ENCODE measurements at regions of chr15 and their contacts with region 1.

Region 1: DNA sequence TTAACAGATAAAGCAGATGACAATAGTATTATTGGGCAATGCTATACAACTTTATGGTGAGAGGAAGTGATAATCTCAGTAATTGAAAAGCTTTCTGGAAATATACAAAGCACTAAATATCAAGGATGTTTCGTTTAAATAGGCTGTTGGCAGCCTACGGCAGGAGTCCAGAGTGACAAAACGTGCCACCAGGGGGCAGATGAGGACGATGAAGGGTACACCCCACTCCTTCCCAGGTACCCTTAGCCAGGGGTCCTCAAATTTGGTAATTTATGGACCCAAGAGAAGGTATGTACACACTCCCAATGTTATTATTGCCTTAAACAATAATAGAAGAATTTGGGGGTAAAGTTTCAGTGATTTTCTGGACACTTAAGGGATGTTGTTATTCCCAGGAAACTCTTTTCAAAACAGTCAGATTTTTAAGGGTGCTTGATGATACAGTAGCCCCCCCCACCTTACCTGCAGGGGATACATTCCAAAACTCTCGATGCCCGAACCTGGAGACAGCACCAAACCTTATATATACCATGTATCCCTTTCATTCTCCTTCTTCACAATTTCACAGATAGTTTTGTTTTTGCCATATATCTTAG is 1.4 kb upstream of the MAGEL2 start:
- DNase-seq: peak; percentile 40 to 70 (median 60)
- H3K4me3 ChIP-seq: no peak overlapping the region
- H3K27ac ChIP-seq: no peak overlapping the region
- H3K4me1 ChIP-seq: no peaks in the 10 kb centered on the region
- H3K27me3 ChIP-seq: no peaks in the 10 kb centered on the region
- CTCF ChIP-seq: peak; percentile 16 to 34 (median 21)
- EP300 ChIP-seq: no peak
- POLR2A ChIP-seq: no peak

Region 2: GRCh38 chr15:23663225-23663624 is 14.2 kb after region 1 on chr15:
- intact Hi-C with region 1: no loop called
- DNase-seq: no peak
- H3K4me3 ChIP-seq: no peak overlapping the region
- H3K27ac ChIP-seq: no peak overlapping the region
- H3K4me1 ChIP-seq: no peaks in the 10 kb centered on the region
- H3K27me3 ChIP-seq: no peaks in the 10 kb centered on the region
- CTCF ChIP-seq: no peak
- EP300 ChIP-seq: no peak
- POLR2A ChIP-seq: no peak

Region 3: GRCh38 chr15:23857028-23857641 is 208.1 kb after region 1 on chr15:
- intact Hi-C with region 1: loop called in 3 of 4 experiments (anchors 5 kb)
- DNase-seq: peak in 4 of 5 donors; percentile 23 to 52 (median 40)
- H3K4me3 ChIP-seq: no peak overlapping the region
- H3K27ac ChIP-seq: no peak overlapping the region
- H3K4me1 ChIP-seq: peaks cover 3% of the 10 kb centered on the region
- H3K27me3 ChIP-seq: no peaks in the 10 kb centered on the region
- CTCF ChIP-seq: no peak
- EP300 ChIP-seq: no peak
- POLR2A ChIP-seq: no peak

Region 4: GRCh38 chr15:24054547-24055245 is 405.7 kb after region 1 on chr15:
- intact Hi-C with region 1: no loop called
- DNase-seq: no peak
- H3K4me3 ChIP-seq: no peak overlapping the region
- H3K27ac ChIP-seq: no peak overlapping the region
- H3K4me1 ChIP-seq: no peaks in the 10 kb centered on the region
- H3K27me3 ChIP-seq: no peaks in the 10 kb centered on the region
- CTCF ChIP-seq: no peak
- EP300 ChIP-seq: no peak
- POLR2A ChIP-seq: no peak

Measured in ovary (tissue), 10 donors.